ENCODE measurements at regions of chr4 and their contacts with region 1.

Region 1: GRCh38 chr4:21628116-21628670 is 320.4 kb downstream of the KCNIP4 start:
- DNase-seq: no peak
- H3K4me3 ChIP-seq: no peak overlapping the region
- CTCF ChIP-seq: no peak

Region 2: DNA sequence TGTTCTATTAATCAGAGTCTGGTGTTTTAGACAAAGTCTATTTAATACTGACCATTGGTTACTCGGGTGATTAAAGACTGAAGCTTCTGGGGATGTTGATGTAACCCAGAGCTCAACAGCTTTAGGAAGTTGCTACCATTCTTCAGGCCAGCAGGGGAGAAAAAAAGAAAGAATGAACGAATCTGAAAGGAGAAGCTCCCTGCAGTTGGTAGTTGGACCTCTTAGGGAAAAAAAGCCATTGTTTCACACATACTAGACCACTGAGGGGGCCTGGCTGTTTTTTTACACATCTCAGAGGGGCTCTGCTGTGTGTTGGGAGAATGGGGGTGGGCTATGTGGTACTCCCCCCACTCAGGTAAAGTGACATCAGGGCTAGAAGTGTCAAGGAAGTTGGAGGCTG is 58.6 kb before region 1 on chr4:
- in situ Hi-C with region 1: loop called (anchors 5 kb)
- DNase-seq: no peak
- H3K4me3 ChIP-seq: no peak overlapping the region
- CTCF ChIP-seq: no peak

Measured in astrocyte of the cerebellum (primary cell).